A673 (cell line): ENCODE measurements at regions of chr9 and their contacts with region 1.

Region 1: DNA sequence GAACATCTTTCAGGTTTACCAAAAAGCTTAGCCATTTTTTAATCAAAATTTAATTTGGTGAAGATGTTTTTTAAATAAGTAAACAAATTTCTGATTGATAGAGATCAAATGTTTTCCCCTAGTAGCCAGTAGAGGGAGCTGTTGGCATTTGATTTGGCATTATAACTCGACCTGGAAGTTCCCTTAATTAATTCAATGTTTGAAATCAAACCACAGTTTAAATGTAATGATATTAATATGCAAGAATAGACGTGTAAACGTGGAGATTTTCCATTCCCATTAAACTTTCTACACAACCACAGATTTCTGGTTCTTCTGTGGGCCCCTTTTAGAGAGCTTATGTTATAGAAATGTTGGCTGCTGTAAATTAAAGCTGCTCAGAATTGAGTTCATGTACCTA is 148.1 kb upstream of the MPDZ start:
- DNase-seq: peak; percentile 60
- H3K4me3 ChIP-seq: no peak overlapping the region
- H3K27ac ChIP-seq: no peak overlapping the region
- H3K4me1 ChIP-seq: peaks cover 23% of the 10 kb centered on the region
- H3K27me3 ChIP-seq: no peaks in the 10 kb centered on the region
- CTCF ChIP-seq: peak; percentile 77

Region 2: GRCh38 chr9:13213337-13213736 is 214.2 kb before region 1 on chr9:
- CTCF ChIA-PET with region 1: interaction called, 3 read pairs
- POLR2A ChIA-PET with region 1: no interaction called
- intact Hi-C with region 1: loop called (anchors 5 kb)
- DNase-seq: peak; percentile 44
- H3K4me3 ChIP-seq: no peak overlapping the region
- H3K27ac ChIP-seq: no peak overlapping the region
- H3K4me1 ChIP-seq: no peaks in the 10 kb centered on the region
- H3K27me3 ChIP-seq: no peaks in the 10 kb centered on the region
- CTCF ChIP-seq: peak; percentile 61

Region 3: DNA sequence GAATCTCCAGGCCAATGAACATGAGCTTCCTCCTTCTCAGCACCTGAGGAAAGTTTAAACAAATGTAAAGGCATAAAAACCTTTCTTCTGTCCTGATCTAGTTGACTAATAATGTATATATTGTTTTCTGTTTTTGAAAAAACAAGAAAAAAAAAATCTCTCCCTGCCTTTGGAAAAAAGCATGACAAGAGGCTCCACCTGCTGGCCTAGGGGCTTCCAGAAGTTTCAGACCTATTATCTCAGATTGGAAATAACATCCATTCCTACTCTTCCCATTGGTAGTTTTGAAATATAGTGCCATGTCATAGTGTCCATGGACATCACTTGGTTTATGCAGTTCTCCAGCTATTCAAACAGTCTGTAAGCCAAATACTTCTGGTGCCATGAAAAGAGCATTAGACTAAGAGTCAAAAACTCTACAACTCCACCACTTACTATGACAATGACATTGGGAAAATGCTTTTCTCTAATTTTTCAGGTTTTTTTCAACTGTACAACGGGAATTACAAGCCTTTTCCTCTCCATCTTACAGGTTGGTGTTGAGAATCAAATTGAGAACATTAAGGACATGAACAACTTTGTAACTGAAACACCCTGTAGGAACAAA is 261.5 kb after region 1 on chr9:
- CTCF ChIA-PET with region 1: no interaction called
- POLR2A ChIA-PET with region 1: no interaction called
- intact Hi-C with region 1: loop called (anchors 5 kb)
- DNase-seq: peak; percentile 43
- H3K4me3 ChIP-seq: no peak overlapping the region
- H3K27ac ChIP-seq: no peak overlapping the region
- H3K4me1 ChIP-seq: no peaks in the 10 kb centered on the region
- H3K27me3 ChIP-seq: no peaks in the 10 kb centered on the region
- CTCF ChIP-seq: peak; percentile 60

Region 4: DNA sequence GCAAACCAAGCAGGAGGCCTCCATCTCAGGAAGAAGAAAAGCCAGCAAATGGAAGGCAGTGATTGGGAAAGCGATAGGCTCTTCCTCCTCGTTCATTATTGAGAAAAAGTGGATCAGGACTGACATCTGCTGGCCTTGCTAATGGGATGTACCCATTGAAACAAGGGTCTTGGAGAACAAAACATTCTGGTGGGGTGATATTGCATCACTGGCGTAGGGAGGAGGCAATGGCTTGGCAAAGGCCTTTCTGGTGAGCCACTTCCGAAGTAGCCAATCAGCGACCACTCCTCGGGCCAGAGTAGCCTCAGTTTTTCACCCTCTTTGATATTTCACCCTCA is 973.0 kb after region 1 on chr9:
- CTCF ChIA-PET with region 1: no interaction called
- POLR2A ChIA-PET with region 1: no interaction called
- intact Hi-C with region 1: loop called (anchors 5 kb)
- DNase-seq: peak; percentile 83
- H3K4me3 ChIP-seq: no peak overlapping the region
- H3K27ac ChIP-seq: peak overlapping the region; percentile 37
- H3K4me1 ChIP-seq: peaks cover 5% of the 10 kb centered on the region
- H3K27me3 ChIP-seq: no peaks in the 10 kb centered on the region
- CTCF ChIP-seq: peak; percentile 50

Region 5: DNA sequence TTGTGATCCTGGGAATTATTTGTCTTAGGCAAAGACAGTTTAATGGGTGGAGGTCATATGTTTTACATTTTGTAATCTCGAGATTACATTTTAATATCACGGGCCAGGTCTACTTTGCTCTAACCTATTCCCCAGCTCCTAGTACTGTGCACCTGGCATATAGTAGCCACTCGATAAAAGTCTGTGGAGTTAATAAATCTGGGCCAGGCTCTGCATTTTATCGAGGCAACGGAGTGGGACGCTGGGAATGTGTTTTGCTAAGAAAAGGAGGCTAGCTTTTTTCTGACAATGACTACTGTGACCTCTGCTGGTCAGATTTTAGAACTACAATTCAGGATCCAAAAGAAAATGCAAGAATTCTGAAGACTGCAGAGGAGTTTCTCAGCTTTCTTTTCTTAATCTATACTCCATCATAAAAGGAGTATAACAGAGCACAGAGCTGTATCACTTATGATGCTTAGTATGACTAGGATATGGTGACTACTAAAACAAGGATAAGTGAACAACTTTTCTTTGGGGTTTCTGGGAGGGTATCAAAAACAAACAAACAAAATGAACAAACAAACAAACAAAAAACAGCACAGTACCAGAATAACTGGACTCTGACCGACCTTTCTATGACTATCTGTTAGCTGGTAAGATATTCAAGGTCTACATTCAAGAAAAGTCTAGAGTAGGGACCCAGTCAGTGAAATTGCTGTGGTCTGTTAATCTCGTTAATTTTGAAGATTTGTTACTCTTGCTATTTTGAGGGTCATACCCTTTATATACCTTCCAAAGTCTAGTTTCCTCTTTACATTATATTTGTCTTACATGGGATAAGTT is 1341.0 kb after region 1 on chr9:
- CTCF ChIA-PET with region 1: no interaction called
- POLR2A ChIA-PET with region 1: no interaction called
- intact Hi-C with region 1: loop called (anchors 5 kb)
- DNase-seq: peak; percentile 75
- H3K4me3 ChIP-seq: no peak overlapping the region
- H3K27ac ChIP-seq: no peak overlapping the region
- H3K4me1 ChIP-seq: peaks cover 17% of the 10 kb centered on the region
- H3K27me3 ChIP-seq: no peaks in the 10 kb centered on the region
- CTCF ChIP-seq: peak; percentile 62